ENCODE measurements at regions of chr7 and their contacts with region 1.

Region 1: GRCh38 chr7:11427686-11428273 is 404.2 kb downstream of the THSD7A start:
- DNase-seq: no peak
- H3K4me3 ChIP-seq: no peak overlapping the region
- H3K27ac ChIP-seq: no peak overlapping the region
- H3K4me1 ChIP-seq: no peaks in the 10 kb centered on the region
- H3K27me3 ChIP-seq: no peaks in the 10 kb centered on the region
- CTCF ChIP-seq: peak; percentile 79

Region 2: DNA sequence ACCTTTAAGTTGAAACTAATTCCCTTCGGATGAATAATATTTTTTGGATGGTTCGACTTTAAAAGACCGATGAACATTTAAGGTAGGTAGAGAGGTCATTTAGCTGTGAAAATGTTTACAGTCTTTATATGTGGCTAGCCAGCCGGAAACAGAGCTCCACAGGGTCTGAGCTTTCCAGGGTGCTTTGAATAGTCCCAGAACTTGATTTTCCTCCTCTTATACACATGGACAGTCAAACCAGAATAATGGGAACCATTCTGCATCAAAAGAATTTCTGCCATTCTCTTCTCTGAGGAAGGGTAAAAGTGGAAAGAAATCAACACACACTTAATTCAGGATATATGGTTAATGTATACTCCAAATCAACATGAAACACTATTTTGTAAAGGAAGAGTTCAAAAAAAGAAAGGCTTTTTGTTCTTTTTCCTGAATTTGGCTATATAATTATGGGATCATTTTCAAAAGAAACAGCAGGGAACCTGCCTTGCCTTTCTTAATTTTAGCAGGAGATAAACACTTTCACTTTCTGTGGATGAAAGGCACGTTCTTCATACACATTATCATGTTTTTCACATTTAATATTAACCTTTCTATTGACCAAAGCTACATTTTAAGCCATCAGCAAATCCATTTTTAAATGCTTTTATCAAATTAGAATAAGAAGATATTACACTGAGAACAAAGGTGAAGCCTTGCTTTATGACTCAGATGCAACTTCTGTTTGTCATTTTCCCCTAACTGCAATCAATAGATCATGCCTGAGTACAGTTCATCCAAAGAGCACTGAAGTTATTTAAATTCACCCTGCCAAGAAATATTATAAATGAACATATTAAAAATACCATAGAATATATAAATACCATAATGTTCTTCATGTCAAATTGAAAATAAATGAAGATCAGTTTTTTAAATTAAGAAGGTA is 97.0 kb after region 1 on chr7:
- intact Hi-C with region 1: no loop called
- DNase-seq: no peak
- H3K4me3 ChIP-seq: no peak overlapping the region
- H3K27ac ChIP-seq: no peak overlapping the region
- H3K4me1 ChIP-seq: no peaks in the 10 kb centered on the region
- H3K27me3 ChIP-seq: no peaks in the 10 kb centered on the region
- CTCF ChIP-seq: no peak

Region 3: GRCh38 chr7:12490117-12490688 is 1062.4 kb after region 1 on chr7:
- intact Hi-C with region 1: loop called (anchors 10 kb)
- DNase-seq: no peak
- H3K4me3 ChIP-seq: no peak overlapping the region
- H3K27ac ChIP-seq: no peak overlapping the region
- H3K4me1 ChIP-seq: no peaks in the 10 kb centered on the region
- H3K27me3 ChIP-seq: no peaks in the 10 kb centered on the region
- CTCF ChIP-seq: peak; percentile 61